ENCODE measurements at regions of chr1 and their contacts with region 1.

Region 1: DNA sequence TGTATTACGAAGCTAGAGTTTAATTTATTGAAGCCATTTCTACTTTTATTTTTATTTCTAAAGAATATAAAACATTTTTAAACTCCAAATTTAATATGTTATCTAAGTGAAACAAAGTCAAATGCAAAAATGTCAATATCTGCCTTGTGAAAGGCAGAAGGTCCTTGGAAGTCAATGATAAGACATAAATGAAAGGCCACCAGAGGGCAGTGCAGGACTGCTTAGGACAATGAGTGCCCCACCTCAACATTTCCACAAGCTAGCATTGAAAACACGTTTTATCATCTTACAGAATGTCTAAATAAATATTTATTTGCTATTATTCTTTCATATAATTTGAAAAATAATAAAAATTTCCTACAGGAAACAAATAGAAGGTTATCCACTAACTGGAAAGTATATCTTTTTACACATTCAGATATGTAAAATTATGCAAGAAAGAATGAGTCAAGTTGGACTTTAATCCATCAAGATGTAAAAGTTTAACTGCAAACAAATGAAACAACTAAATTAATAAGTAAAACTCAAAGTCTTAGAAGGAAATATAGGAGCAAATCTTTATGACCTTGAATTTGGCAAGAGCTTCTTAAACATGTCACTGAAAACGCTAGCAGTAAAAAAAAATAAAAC is 140.1 kb upstream of the FMN2 start:
- DNase-seq: peak; percentile 56 to 79
- ATAC-seq: peak in 1 of 2 experiments; percentile 77; a peak in 3 of 6 replicates
- H3K4me3 ChIP-seq: no peak overlapping the region
- H3K27ac ChIP-seq: no peak overlapping the region
- H3K4me1 ChIP-seq: 0 out of 3 replicates have a peak, but pooled peaks cover 3% of the 10 kb centered on the region
- CTCF ChIP-seq: peak; percentile 88
- EP300 ChIP-seq: no peak
- POLR2A ChIP-seq: no peak
- RAD21 ChIP-seq: peak; percentile 84 to 87

Region 2: DNA sequence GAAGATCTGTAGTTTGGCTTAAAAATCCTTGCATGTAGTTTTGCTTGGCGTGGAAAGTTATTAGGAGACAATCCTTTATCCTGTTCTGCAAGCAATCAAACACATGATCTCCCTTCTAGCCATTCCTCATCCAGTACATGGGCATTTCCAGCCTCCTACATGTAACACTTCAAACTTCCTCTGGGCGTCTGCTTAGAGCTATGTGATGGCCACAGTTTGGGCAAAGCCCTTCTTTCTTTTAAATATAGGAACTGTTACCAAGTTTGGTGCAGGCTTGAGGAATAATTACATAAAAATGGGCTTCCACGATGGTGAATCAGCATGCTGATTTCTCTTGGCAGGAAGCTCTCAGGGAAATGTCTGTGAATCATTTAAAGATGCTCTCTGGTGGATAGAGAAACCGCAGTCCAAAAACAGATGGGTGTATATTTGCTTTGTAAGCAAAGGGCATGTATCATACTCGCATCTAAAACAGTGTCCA is 36.8 kb before region 1 on chr1:
- CTCF ChIA-PET with region 1: interaction called, 15 read pairs
- POLR2A ChIA-PET with region 1: no interaction called
- DNase-seq: peak; percentile 18 to 31
- ATAC-seq: peak; percentile 89 to 93
- H3K4me3 ChIP-seq: no peak overlapping the region
- H3K27ac ChIP-seq: no peak overlapping the region
- H3K4me1 ChIP-seq: peaks cover 29% of the 10 kb centered on the region
- CTCF ChIP-seq: no peak
- EP300 ChIP-seq: no peak
- POLR2A ChIP-seq: no peak
- RAD21 ChIP-seq: no peak

Region 3: GRCh38 chr1:239939602-239940001 is 12.0 kb before region 1 on chr1:
- CTCF ChIA-PET with region 1: interaction called, 21 read pairs
- POLR2A ChIA-PET with region 1: no interaction called
- DNase-seq: no peak
- ATAC-seq: no peak
- H3K4me3 ChIP-seq: no peak overlapping the region
- H3K27ac ChIP-seq: no peak overlapping the region
- H3K4me1 ChIP-seq: no peaks in the 10 kb centered on the region
- CTCF ChIP-seq: no peak
- EP300 ChIP-seq: no peak
- POLR2A ChIP-seq: no peak
- RAD21 ChIP-seq: no peak

Region 4: GRCh38 chr1:239976130-239976968 is 24.7 kb after region 1 on chr1:
- CTCF ChIA-PET with region 1: interaction called, 72 read pairs
- POLR2A ChIA-PET with region 1: no interaction called
- DNase-seq: peak; percentile 41 to 68
- ATAC-seq: peak; percentile 84 to 87; a peak in 5 of 6 replicates
- H3K4me3 ChIP-seq: no peak overlapping the region
- H3K27ac ChIP-seq: no peak overlapping the region
- H3K4me1 ChIP-seq: no peaks in the 10 kb centered on the region
- CTCF ChIP-seq: peak; percentile 97
- EP300 ChIP-seq: no peak
- POLR2A ChIP-seq: no peak
- RAD21 ChIP-seq: peak; percentile 85 to 91

Region 5: GRCh38 chr1:239987103-239987745 is 35.6 kb after region 1 on chr1:
- CTCF ChIA-PET with region 1: interaction called, 40 read pairs
- POLR2A ChIA-PET with region 1: no interaction called
- DNase-seq: peak in 1 of 2 experiments; percentile 67
- ATAC-seq: peak in 1 of 2 experiments; percentile 63; a peak in 2 of 6 replicates
- H3K4me3 ChIP-seq: no peak overlapping the region
- H3K27ac ChIP-seq: no peak overlapping the region
- H3K4me1 ChIP-seq: no peaks in the 10 kb centered on the region
- CTCF ChIP-seq: peak; percentile 88
- EP300 ChIP-seq: no peak
- POLR2A ChIP-seq: no peak
- RAD21 ChIP-seq: peak; percentile 74 to 84

Region 6: GRCh38 chr1:240004086-240004749 is 52.6 kb after region 1 on chr1:
- CTCF ChIA-PET with region 1: interaction called, 31 read pairs
- POLR2A ChIA-PET with region 1: no interaction called
- DNase-seq: peak; percentile 37 to 46
- ATAC-seq: peak in 1 of 2 experiments; percentile 70; a peak in 3 of 6 replicates
- H3K4me3 ChIP-seq: no peak overlapping the region
- H3K27ac ChIP-seq: no peak overlapping the region
- H3K4me1 ChIP-seq: peaks cover 11% of the 10 kb centered on the region
- CTCF ChIP-seq: peak; percentile 75
- EP300 ChIP-seq: no peak
- POLR2A ChIP-seq: no peak
- RAD21 ChIP-seq: peak; percentile 15 to 26; a peak in 1 of 5 replicates